Aorta (tissue), 5 donors: ENCODE measurements at regions of chrX and their contacts with region 1.

Region 1: GRCh38 chrX:65601530-65602220 is 65.8 kb upstream of the MSN start:
- DNase-seq: peak; percentile 93 to 95
- ATAC-seq: peak; percentile 96
- H3K4me3 ChIP-seq: no peak overlapping the region
- H3K27ac ChIP-seq: peak overlapping the region in 1 of 2 donors; percentile 94
- H3K4me1 ChIP-seq: peaks cover 3 to 8% of the 10 kb centered on the region in 2 donors
- H3K27me3 ChIP-seq: no peaks in the 10 kb centered on the region

Region 2: GRCh38 chrX:65635378-65635777 is 33.7 kb after region 1 on chrX:
- intact Hi-C with region 1: loop called (anchors 2 to 5 kb)
- DNase-seq: peak in 1 of 2 donors; percentile 48
- ATAC-seq: peak; percentile 86
- H3K4me3 ChIP-seq: no peak overlapping the region
- H3K27ac ChIP-seq: peak overlapping the region in 1 of 2 donors; percentile 51
- H3K4me1 ChIP-seq: peaks cover 2 to 5% of the 10 kb centered on the region in 2 donors
- H3K27me3 ChIP-seq: no peaks in the 10 kb centered on the region

Region 3: DNA sequence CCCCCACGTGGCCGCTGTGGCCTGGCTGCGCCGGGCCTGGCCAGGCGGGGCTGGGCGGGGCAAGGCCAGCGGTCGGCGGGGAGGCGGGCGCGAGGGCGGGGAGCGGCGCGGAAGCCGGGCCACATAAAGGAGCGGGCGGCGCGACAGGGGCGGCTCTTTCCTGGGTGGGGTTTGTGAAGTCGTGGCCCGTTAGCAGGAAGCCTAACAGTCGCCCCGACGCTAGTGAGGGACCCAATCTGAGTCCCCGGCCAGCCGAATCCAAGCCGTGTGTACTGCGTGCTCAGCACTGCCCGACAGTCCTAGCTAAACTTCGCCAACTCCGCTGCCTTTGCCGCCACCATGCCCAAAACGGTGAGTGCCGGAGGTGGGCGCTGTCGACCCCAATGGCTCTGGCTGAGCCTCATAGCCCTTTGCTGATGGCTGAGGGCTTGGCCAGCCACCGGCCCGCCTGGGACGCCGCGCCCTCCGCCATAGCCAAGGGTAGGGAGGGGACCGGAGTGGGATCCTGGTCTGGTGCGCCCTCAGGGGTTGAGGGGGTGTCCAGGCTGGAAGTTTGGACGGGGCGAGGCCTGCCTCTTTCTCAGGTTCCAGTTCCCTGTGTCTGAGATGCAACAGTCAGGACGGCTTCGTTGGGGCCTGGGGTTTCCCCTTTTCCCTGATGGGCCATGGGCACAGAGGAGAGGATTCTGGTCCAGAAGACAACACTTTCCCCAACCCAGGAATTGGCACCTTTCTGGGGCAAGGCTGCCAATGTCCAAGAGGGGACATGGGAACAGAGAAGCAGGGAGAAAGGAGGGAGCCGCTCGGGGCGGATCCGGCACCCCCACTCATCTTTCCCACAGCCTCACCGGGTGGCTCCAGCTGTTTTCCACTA is 66.1 kb after region 1 on chrX and contains the start of gene MSN:
- intact Hi-C with region 1: loop called (anchors 2 to 5 kb)
- DNase-seq: peak; percentile 86 to 94
- ATAC-seq: peak; percentile 92
- H3K4me3 ChIP-seq: peak within 1 kb of the TSS; percentile 66 to 70
- H3K27ac ChIP-seq: peak within 1 kb of the TSS; percentile 17 to 87
- H3K4me1 ChIP-seq: no peaks in the 10 kb centered on the region
- H3K27me3 ChIP-seq: no peaks in the 10 kb centered on the region
- total RNA-seq, gene MSN: 374 to 532 TPM